Posterior cingulate gyrus (tissue), 11 donors: ENCODE measurements at regions of chr4 and their contacts with region 1.

Region 1: GRCh38 chr4:151099229-151099975 is at the start of gene RPS3A:
- DNase-seq: peak; percentile 91 to 99 (median 96)

Region 2: GRCh38 chr4:151004222-151004621 is 95.2 kb before region 1 on chr4:
- intact Hi-C with region 1: no loop called
- DNase-seq: no peak

Region 3: DNA sequence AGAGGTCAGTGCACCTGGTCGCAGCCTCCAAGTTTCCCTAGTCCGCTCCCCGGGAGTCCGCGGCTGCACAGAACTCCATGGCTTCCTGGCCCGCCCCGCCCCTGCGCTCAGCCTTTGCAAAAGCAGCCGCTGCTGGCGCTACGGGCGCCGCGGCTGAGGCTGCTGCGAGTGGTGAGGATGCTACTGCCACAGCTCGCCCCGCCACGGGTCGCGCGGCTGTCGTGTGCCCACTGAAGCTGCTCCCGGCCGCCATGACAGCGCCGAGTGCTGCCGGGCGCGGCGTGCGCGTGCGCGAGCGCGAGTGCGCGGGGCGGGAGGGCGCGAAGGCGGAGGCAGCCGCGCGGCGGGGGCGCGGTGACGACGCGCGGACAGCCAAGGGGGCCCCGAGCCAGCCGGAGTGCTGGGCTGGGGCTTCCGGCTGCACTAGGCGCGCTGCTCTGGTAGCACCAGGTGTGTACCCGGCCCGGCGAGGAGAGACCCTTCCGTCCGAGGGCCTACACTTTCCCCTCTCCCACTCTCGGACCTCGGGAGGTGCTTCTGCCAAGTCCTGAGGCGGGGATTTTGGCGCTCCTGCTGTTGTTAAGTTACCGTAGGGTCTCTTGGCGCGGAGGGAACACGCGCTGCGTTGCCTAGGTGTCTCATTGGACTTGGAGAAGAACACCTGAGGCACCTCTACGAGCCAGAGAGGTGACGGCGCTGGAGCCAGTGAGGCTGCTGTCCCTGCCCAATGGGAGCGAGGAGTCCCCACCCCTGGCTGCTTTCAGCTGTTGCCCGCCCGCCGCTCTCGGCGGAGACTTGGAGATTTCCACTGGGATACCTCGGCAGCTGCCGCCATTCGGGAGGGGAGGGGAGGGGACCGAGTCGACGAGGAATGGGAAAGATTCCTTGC is 83.7 kb before region 1 on chr4:
- intact Hi-C with region 1: loop called (anchors 2 kb)
- DNase-seq: peak; percentile 55 to 97 (median 80)